Colonic mucosa (tissue), 4 donors: ENCODE measurements at regions of chr11 and their contacts with region 1.

Region 1: DNA sequence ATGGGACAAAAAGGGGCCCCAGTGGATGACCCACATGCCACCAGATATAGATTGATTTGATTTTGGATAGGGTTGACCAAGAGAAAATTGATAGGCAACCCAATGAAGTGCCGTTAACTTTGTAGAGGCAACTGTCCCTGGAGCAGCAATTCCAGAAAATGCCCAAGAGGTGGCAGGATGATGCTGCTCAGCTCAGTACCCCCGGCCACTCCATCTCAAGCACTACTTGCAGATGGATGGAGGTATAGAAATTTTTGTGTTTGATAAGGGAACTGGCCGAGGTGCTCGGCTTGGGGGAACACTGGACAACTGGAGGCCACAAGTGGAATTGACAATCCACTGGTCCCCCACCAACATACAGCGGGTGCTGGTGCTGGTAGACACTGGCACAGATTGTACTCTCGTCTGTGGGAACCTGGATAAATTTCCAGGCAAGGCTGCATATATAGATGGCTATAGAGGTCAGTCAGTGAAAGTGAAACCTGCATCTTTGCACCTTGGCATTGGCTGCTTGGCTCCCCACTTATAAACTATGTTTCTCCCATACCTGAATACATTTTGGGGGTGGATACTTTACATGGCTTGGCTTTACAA is 86.3 kb downstream of the CCDC83 start:
- DNase-seq: peak; percentile 39
- H3K4me3 ChIP-seq: no peak overlapping the region
- H3K27ac ChIP-seq: no peak overlapping the region
- H3K4me1 ChIP-seq: no peaks in the 10 kb centered on the region
- H3K27me3 ChIP-seq: no peaks in the 10 kb centered on the region
- CTCF ChIP-seq: peak; percentile 48

Region 2: GRCh38 chr11:85643191-85643614 is 298.3 kb before region 1 on chr11:
- intact Hi-C with region 1: no loop called
- DNase-seq: no peak
- H3K4me3 ChIP-seq: no peak overlapping the region
- H3K27ac ChIP-seq: no peak overlapping the region
- H3K4me1 ChIP-seq: no peaks in the 10 kb centered on the region
- H3K27me3 ChIP-seq: no peaks in the 10 kb centered on the region
- CTCF ChIP-seq: no peak

Region 3: DNA sequence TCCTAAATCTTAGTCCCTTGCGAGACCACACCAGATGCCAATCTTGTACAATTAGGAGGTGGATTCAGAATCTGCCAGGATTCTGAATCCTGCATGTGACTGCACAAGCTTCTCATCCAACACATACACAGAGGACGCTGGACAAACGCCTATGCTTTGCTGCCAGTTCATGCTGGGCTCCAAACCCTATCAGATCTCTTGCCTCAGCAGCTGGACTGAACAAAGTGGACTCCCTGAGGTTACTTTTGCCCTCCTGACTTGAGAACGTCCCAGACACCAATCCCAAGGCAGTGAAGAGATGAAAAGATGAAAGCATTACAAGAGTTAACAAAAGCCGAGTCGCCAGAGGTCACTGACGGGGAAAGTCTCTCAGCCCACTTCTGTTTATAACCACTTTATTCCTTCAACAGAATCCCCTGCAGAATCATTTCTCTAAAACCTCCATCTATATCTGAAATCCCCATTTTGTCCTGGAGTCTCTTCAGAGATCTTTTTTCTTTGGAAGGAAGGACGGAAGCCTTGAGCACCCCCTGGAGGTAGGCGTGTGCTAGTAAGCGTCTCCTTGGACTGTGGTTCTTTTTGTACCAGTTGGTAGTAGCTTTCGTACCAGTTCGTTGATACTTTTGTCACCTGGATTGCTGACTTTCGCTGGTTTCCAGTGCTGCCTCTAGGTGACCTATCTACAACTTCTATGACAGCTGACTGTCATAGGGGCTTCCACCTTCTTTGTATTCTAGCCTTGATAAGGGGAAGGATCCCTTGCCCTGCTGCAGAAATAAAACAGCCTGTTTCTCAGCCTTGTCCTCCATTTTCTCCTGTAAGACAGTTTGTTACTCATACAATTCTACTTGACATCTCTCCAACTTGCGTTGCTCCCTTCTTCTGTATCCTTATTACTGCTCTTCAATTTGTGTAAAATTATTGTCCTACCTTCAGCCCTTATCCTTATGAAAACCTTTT is 276.9 kb after region 1 on chr11:
- intact Hi-C with region 1: loop called (anchors 5 kb)
- DNase-seq: peak; percentile 83
- H3K4me3 ChIP-seq: no peak overlapping the region
- H3K27ac ChIP-seq: no peak overlapping the region
- H3K4me1 ChIP-seq: no peaks in the 10 kb centered on the region
- H3K27me3 ChIP-seq: no peaks in the 10 kb centered on the region
- CTCF ChIP-seq: peak; percentile 84

Region 4: GRCh38 chr11:86291466-86292262 is 350.2 kb after region 1 on chr11:
- intact Hi-C with region 1: loop called (anchors 5 kb)
- DNase-seq: peak; percentile 57
- H3K4me3 ChIP-seq: no peak overlapping the region
- H3K27ac ChIP-seq: no peak overlapping the region
- H3K4me1 ChIP-seq: no peaks in the 10 kb centered on the region
- H3K27me3 ChIP-seq: no peaks in the 10 kb centered on the region
- CTCF ChIP-seq: peak; percentile 69